Heart right ventricle (tissue), 16 donors: ENCODE measurements at regions of chr12 and their contacts with region 1.

Region 1: DNA sequence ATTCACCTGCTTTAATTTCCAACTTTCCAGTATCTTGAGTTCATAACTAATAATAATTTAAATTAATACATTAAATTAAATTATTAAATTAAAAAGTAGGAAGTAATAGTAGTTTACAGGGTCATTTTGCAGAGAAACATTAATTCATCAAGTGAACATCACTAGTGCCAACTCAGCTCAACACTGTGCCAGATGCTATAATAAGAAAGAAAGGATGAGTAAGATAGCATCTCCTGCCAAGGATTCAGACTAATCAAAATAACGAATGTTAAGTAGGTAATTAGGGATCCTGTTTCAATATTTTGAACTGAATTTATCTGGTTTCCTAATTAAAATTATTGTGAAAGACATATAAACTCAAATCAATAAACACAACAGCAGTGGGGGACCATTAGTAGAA is 596.7 kb downstream of the SLC6A15 start:
- DNase-seq: no peak
- ATAC-seq: no peak
- H3K4me3 ChIP-seq: no peak overlapping the region
- H3K27ac ChIP-seq: no peak overlapping the region
- H3K4me1 ChIP-seq: no peaks in the 10 kb centered on the region
- H3K27me3 ChIP-seq: no peaks in the 10 kb centered on the region
- CTCF ChIP-seq: no peak

Region 2: DNA sequence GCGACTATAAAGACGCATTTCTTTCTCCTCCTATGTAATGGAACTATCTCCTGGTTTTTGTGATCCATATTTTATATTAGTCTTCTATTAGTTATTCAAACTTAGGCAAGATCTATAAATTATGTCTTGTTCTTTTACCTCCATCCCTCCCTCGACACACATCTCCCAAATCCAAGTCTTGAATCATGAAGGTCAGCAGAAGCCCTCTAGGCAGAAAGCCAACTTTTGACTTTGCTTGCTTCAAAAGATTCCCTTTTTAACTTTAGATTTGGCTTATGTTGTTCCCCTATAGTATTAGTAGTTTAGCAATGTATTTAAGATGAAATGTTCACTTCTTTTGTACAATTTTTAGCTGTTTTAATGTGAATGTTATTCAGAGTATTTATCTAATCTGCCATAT is 93.1 kb before region 1 on chr12:
- intact Hi-C with region 1: no loop called
- DNase-seq: no peak
- ATAC-seq: no peak
- H3K4me3 ChIP-seq: no peak overlapping the region
- H3K27ac ChIP-seq: no peak overlapping the region
- H3K4me1 ChIP-seq: no peaks in the 10 kb centered on the region
- H3K27me3 ChIP-seq: no peaks in the 10 kb centered on the region
- CTCF ChIP-seq: no peak

Region 3: GRCh38 chr12:84305144-84305543 is 10.8 kb before region 1 on chr12:
- intact Hi-C with region 1: loop called in 1 of 10 experiments (anchors 1 kb)
- DNase-seq: no peak
- ATAC-seq: no peak
- H3K4me3 ChIP-seq: no peak overlapping the region
- H3K27ac ChIP-seq: no peak overlapping the region
- H3K4me1 ChIP-seq: no peaks in the 10 kb centered on the region
- H3K27me3 ChIP-seq: no peaks in the 10 kb centered on the region
- CTCF ChIP-seq: no peak

Region 4: GRCh38 chr12:84348582-84348981 is 32.7 kb after region 1 on chr12:
- intact Hi-C with region 1: no loop called
- DNase-seq: no peak
- ATAC-seq: no peak
- H3K4me3 ChIP-seq: no peak overlapping the region
- H3K27ac ChIP-seq: no peak overlapping the region
- H3K4me1 ChIP-seq: no peaks in the 10 kb centered on the region
- H3K27me3 ChIP-seq: no peaks in the 10 kb centered on the region
- CTCF ChIP-seq: no peak

Region 5: GRCh38 chr12:84572186-84572585 is 256.3 kb after region 1 on chr12:
- intact Hi-C with region 1: no loop called
- DNase-seq: no peak
- ATAC-seq: no peak
- H3K4me3 ChIP-seq: no peak overlapping the region
- H3K27ac ChIP-seq: no peak overlapping the region
- H3K4me1 ChIP-seq: no peaks in the 10 kb centered on the region
- H3K27me3 ChIP-seq: no peaks in the 10 kb centered on the region
- CTCF ChIP-seq: no peak

Region 6: DNA sequence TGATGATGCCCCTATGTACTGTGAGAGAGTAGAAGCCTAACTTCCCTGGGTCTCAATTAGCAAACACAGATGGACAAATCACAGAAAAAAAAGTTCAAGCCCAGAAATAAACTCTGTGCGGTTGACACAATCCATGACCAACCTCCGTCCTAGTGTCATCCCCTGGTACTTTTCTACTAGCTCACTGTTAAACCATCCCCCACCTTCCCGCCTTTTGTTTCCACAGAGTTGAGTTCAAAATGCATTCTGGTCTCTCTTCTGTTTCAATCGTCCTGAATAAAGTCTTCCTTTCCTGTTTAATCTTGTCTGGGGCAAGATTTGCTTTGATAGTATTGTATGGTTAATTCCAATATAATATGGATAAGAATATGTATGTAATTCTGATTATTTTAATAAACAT is 396.8 kb after region 1 on chr12:
- intact Hi-C with region 1: no loop called
- DNase-seq: no peak
- ATAC-seq: no peak
- H3K4me3 ChIP-seq: no peak overlapping the region
- H3K27ac ChIP-seq: no peak overlapping the region
- H3K4me1 ChIP-seq: no peaks in the 10 kb centered on the region
- H3K27me3 ChIP-seq: no peaks in the 10 kb centered on the region
- CTCF ChIP-seq: no peak